Left ventricle myocardium inferior (tissue), 1 donor: ENCODE measurements at regions of chr15 and their contacts with region 1.

Region 1: GRCh38 chr15:88610701-88611231 is 10.4 kb upstream of the AEN start:
- DNase-seq: no peak
- H3K4me3 ChIP-seq: no peak overlapping the region
- H3K27ac ChIP-seq: no peak overlapping the region
- H3K4me1 ChIP-seq: peaks cover 4% of the 10 kb centered on the region
- H3K27me3 ChIP-seq: peaks cover 34% of the 10 kb centered on the region
- CTCF ChIP-seq: no peak

Region 2: GRCh38 chr15:88476635-88477060 is 134.1 kb before region 1 on chr15:
- intact Hi-C with region 1: loop called (anchors 5 kb)
- DNase-seq: no peak
- H3K4me3 ChIP-seq: no peak overlapping the region
- H3K27ac ChIP-seq: peak overlapping the region; percentile 62
- H3K4me1 ChIP-seq: peaks cover 31% of the 10 kb centered on the region
- H3K27me3 ChIP-seq: no peaks in the 10 kb centered on the region
- CTCF ChIP-seq: peak; percentile 65

Region 3: DNA sequence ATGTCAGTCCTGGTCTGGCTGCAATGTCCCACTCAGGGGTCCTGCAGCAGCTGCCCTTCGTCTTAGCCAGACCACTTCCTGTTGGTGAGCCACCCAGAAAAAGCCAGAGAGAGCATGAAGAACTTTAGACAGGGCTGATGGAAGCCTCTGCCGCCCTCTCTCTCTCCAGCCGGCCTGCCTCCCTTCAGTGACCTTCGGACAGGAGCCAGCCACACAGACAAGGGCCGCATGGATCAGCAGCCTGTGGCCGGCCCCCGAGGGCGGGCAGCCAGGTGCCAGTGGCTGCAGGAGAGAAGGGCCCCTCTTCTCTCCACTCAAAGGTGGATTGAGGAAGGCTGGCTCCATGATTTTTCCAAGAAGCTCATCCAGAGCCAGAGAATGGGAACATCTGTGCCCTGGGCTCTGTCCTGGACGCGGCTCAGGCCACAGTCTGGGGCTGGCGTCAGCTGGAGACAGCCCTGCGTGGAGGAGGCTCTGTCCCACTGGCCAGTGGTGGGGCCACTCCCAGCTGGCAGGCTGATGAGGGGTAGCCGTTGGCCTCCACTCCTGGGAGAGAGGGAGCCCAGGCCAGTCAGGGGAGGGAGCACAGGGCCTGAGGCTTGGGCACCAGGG is 71.0 kb after region 1 on chr15:
- intact Hi-C with region 1: no loop called
- DNase-seq: no peak
- H3K4me3 ChIP-seq: no peak overlapping the region
- H3K27ac ChIP-seq: no peak overlapping the region
- H3K4me1 ChIP-seq: no peaks in the 10 kb centered on the region
- H3K27me3 ChIP-seq: peaks cover 15% of the 10 kb centered on the region
- CTCF ChIP-seq: no peak